ENCODE measurements at regions of chr2 and their contacts with region 1.

Region 1: GRCh38 chr2:67650291-67651133 is 253.4 kb downstream of the ETAA1 start:
- DNase-seq: peak; percentile 77 to 88 (median 84)
- H3K4me3 ChIP-seq: no peak overlapping the region
- H3K27ac ChIP-seq: no peak overlapping the region
- H3K4me1 ChIP-seq: peaks cover 10% of the 10 kb centered on the region
- H3K27me3 ChIP-seq: no peaks in the 10 kb centered on the region
- CTCF ChIP-seq: peak; percentile 32 to 70 (median 43)
- EP300 ChIP-seq: no peak
- POLR2A ChIP-seq: no peak

Region 2: GRCh38 chr2:67581751-67582150 is 68.8 kb before region 1 on chr2:
- intact Hi-C with region 1: no loop called
- DNase-seq: no peak
- H3K4me3 ChIP-seq: no peak overlapping the region
- H3K27ac ChIP-seq: no peak overlapping the region
- H3K4me1 ChIP-seq: no peaks in the 10 kb centered on the region
- H3K27me3 ChIP-seq: no peaks in the 10 kb centered on the region
- CTCF ChIP-seq: no peak
- EP300 ChIP-seq: no peak
- POLR2A ChIP-seq: no peak

Region 3: GRCh38 chr2:67840460-67841068 is 190.1 kb after region 1 on chr2:
- intact Hi-C with region 1: loop called in 2 of 4 experiments (anchors 5 kb)
- DNase-seq: peak; percentile 56 to 78 (median 59)
- H3K4me3 ChIP-seq: no peak overlapping the region
- H3K27ac ChIP-seq: no peak overlapping the region
- H3K4me1 ChIP-seq: peaks cover 2% of the 10 kb centered on the region
- H3K27me3 ChIP-seq: no peaks in the 10 kb centered on the region
- CTCF ChIP-seq: peak in 2 of 3 donors; percentile 53 to 60
- EP300 ChIP-seq: no peak
- POLR2A ChIP-seq: no peak

Region 4: GRCh38 chr2:68023904-68024303 is 373.4 kb after region 1 on chr2:
- intact Hi-C with region 1: loop called in 1 of 4 experiments (anchors 5 kb)
- DNase-seq: no peak
- H3K4me3 ChIP-seq: no peak overlapping the region
- H3K27ac ChIP-seq: no peak overlapping the region
- H3K4me1 ChIP-seq: no peaks in the 10 kb centered on the region
- H3K27me3 ChIP-seq: no peaks in the 10 kb centered on the region
- CTCF ChIP-seq: no peak
- EP300 ChIP-seq: no peak
- POLR2A ChIP-seq: no peak